Tibial artery (tissue), 4 donors: ENCODE measurements at regions of chr10 and their contacts with region 1.

Region 1: DNA sequence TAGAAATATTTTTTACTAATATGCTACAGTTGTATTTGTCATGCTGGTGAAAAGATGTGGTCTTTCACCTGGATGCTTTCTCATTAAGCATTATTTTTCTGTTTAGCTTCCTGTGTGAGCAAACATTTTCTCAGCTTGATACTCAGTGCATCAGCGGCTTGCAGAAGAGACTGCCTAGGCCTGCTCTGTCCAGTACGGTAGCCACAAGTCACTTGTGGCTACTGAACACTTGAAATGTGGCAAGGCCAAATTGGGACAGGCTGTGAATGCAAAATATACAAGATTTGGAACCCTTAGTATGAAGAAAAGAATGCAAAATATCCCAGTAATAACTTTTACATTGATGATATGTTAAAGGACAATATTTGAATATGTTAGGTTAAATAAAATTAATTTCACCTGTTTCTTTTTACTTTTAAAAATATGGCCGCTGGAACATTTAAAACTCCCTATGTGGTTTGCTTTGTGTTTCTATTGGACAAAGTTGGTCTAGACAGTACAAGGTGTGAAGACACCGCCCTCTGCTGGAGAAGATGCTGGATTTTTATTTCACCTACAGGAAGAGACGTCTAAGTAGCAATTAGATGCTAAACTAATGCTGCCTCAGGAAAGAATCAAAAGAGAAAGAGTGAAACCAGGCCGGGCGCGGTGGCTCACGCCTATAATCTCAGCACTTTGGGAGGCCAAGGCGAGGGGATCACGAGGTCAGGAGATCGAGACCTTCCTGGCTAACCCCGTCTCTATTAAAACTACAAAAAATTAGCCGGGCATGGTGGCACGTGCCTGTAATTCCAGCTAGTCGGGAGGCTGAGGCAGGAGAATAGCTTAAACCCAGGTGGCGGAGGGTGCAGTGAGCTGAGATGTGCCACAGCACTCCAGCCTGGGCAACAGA is 5.3 kb downstream of the SRGN start:
- DNase-seq: peak; percentile 82 to 86
- H3K4me3 ChIP-seq: no peak overlapping the region
- H3K27ac ChIP-seq: peak overlapping the region in 1 of 2 donors; percentile 43
- H3K4me1 ChIP-seq: peaks cover 0 to 14% (median 0%) of the 10 kb centered on the region in 4 donors
- H3K27me3 ChIP-seq: no peaks in the 10 kb centered on the region
- CTCF ChIP-seq: peak; percentile 79 to 90

Region 2: DNA sequence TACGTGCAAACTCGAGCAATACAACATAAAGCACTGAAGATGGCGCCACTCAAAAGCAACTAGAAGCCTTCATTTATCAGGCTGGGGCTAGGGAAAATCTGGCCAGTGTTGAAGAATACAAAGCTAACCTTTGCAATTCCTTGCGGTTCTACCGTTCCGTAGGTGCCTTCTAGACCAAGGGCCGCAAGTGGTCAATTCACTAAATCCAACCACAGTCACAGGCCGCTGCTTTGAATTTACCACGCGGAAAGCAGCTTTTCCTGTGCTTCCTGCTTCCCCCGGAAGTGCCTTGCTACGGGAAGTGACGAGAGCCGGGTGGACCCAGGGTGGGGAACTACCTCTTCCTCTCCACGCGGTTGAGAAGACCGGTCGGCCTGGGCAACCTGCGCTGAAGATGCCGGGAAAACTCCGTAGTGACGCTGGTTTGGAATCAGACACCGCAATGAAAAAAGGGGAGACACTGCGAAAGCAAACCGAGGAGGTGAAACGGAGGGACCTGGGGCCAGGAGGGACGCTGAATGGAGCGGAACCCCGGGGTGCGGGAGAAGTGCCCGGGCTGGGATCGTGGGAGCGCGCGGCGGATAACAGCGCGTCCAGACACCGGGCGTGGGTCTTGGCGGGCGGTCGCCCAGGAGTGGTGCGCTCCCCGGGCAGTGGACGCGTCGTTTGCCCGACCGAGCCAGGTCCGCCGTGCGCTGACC is 137.2 kb before region 1 on chr10 and contains the start of gene DDX21:
- intact Hi-C with region 1: loop called (anchors 5 kb)
- DNase-seq: peak; percentile 88 to 92
- H3K4me3 ChIP-seq: peak within 1 kb of the TSS; percentile 70 to 85
- H3K27ac ChIP-seq: peak within 1 kb of the TSS; percentile 58 to 83
- H3K4me1 ChIP-seq: peaks cover 0 to 30% (median 22%) of the 10 kb centered on the region in 4 donors
- H3K27me3 ChIP-seq: no peaks in the 10 kb centered on the region
- CTCF ChIP-seq: peak; percentile 55 to 65

Region 3: DNA sequence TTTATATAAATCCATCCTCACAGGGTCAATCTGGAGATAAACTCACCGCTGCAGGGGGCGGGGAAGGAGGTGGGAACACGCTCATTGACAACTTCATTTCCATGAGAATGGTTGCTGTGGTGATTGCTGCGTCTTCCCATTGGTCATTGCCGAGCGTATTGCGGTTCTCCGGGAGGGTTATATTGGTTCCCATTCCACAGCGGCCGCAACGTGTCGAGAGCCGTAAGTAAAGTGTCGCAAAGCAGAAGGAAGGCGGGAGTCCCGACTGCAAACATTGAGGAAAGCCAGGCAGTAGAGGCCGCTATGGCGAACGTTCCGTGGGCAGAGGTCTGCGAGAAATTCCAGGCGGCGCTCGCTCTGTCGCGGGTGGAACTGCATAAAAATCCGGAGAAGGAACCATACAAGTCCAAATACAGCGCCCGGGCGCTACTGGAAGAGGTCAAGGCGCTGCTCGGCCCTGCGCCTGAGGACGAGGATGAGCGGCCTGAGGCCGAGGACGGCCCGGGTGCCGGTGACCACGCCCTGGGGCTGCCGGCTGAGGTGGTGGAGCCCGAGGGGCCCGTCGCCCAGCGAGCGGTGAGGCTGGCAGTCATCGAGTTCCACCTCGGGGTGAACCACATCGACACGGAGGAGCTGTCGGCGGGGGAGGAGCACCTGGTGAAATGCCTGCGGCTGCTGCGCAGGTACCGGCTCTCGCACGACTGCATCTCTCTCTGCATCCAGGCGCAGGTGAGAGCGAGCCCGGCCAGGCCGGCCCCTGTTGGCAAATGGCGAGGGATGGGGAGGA is 104.5 kb before region 1 on chr10 and contains the start of gene KIFBP:
- intact Hi-C with region 1: loop called (anchors 10 kb)
- DNase-seq: peak; percentile 97 to 98
- H3K4me3 ChIP-seq: peak within 1 kb of the TSS; percentile 80 to 99
- H3K27ac ChIP-seq: peak within 1 kb of the TSS; percentile 90 to 98
- H3K4me1 ChIP-seq: peaks cover 0 to 46% (median 42%) of the 10 kb centered on the region in 4 donors
- H3K27me3 ChIP-seq: no peaks in the 10 kb centered on the region
- CTCF ChIP-seq: peak; percentile 32 to 39

Region 4: DNA sequence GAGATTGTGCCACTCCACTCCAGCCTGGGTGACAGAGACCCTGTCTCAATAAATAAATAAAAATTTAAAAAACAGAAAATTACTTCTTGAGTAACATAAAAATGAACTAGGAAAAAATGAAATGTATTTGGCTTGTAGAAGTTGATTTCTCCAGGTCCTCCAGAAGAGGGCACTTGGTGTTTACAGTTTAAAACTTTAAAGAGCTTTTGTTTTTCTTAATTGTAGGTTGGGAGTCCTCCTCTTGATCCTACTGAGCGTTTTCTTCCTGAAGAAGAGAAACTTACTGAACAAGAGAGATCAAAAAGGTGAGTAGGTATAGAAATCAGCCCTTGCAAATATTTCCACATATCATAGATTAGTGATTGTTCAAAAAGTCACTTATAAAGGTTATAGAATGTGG is 88.4 kb before region 1 on chr10:
- intact Hi-C with region 1: loop called (anchors 5 kb)
- DNase-seq: no peak
- H3K4me3 ChIP-seq: no peak overlapping the region
- H3K27ac ChIP-seq: no peak overlapping the region
- H3K4me1 ChIP-seq: peaks cover 0 to 5% (median 0%) of the 10 kb centered on the region in 4 donors
- H3K27me3 ChIP-seq: no peaks in the 10 kb centered on the region
- CTCF ChIP-seq: peak; percentile 47 to 59

Region 5: GRCh38 chr10:69025370-69025896 is 67.8 kb before region 1 on chr10:
- intact Hi-C with region 1: no loop called
- DNase-seq: no peak
- H3K4me3 ChIP-seq: no peak overlapping the region
- H3K27ac ChIP-seq: no peak overlapping the region
- H3K4me1 ChIP-seq: no peaks in the 10 kb centered on the region
- H3K27me3 ChIP-seq: no peaks in the 10 kb centered on the region
- CTCF ChIP-seq: no peak